ENCODE measurements at regions of chr16 and their contacts with region 1.

Region 1: DNA sequence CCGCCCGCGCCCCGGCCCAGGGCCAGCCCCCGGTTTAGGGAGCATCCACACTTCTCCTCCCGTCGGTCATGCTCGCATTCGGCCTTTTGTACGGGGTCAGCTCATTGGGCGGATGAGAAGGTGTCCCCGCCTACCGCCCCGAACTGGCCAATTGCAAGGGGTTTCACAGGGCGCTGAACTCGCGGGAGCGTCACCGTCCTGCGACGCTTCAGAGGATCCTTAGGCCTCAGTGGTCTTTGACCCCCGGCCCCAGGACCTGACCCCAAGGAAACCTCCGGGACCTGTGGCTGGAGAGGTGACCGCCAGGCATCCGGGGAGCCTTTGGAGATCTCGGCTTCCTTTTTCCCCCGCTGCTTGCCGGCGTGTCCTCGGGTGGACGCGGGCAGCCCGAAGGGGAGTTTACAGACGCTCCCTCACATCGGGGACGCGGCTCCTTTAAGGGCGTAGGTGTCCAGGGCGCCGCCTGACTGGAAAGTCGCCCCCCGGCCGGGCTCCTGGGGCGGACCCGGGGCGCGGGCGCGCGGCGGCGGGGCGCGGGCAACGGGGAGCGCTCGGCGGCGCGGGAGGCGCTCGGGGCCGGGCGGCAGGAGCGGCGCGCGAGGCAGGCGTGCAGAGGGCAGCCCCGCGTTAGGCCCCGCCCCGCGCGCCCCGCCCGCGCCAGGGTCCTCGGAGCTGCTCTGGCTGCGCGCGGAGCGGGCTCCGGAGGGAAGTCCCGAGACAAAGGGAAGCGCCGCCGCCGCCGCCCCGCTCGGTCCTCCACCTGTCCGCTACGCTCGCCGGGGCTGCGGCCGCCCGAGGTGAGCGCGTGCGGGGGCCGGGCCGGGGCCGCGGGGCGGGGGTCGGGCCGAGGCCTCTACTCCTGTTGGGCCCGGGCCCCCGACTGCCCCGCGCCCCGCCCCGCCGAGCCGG is at the start of gene UBE2I:
- DNase-seq: peak; percentile 97 to 99 (median 97)
- ATAC-seq: peak; percentile 87 to 91 (median 90)
- H3K4me3 ChIP-seq: peak within 1 kb of the TSS; percentile 79 to 98 (median 84)
- H3K27ac ChIP-seq: peak within 1 kb of the TSS; percentile 95 to 100 (median 99)
- H3K4me1 ChIP-seq: peaks cover 8 to 43% (median 36%) of the 10 kb centered on the region in 12 donors
- H3K27me3 ChIP-seq: no peaks in the 10 kb centered on the region
- CTCF ChIP-seq: no peak
- POLR2A ChIP-seq: peak in 1 of 2 donors; percentile 23
- total RNA-seq, gene UBE2I: 59.3 to 105 (median 85.9) TPM

Region 2: DNA sequence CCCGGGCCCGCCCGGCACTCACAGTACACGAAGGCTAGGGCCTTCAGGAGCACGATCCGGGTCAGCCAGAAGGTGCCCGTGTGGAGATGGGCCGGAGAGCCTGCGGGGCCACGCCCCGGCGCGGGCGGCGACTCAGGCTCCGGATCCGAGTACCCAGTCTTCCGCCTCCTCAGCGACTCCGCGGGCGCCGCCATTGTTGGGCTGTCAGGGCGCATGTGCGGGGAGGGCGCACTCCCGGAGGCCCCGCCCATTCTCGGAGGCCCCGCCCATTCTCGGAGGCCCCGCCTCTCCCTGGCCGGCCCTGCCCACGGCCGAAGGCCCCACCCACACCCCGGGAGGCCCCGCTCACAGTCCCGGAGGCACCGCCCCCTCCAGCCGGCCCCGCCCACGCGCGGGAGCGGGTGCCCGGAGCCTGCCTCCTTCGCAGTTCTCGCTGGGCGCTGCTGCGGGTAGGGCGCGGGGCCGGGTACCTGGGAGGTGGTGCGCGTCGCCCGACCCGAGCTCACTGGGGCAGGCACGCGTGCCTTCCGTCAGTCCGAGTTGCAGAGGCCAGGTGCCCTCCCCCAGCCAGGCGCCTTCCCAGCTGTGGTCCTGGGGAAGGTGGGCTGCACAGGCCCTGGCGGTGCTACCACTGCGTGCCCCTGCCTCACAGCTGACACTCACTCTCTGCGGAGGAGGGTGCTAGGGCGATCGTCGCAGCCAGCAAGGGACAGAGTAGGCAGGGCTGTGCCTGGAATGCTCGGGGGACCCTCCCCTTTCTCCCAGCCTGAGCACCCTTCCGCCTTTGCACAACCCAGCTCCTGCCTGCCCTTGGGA is 338.3 kb before region 1 on chr16 and contains the start of gene LMF1:
- intact Hi-C with region 1: no loop called
- DNase-seq: peak; percentile 93 to 98 (median 94)
- ATAC-seq: peak; percentile 97 to 99 (median 98)
- H3K4me3 ChIP-seq: peak within 1 kb of the TSS; percentile 49 to 99 (median 90)
- H3K27ac ChIP-seq: peak within 1 kb of the TSS; percentile 55 to 92 (median 84)
- H3K4me1 ChIP-seq: peaks cover 2 to 29% (median 18%) of the 10 kb centered on the region in 12 donors
- H3K27me3 ChIP-seq: no peaks in the 10 kb centered on the region
- CTCF ChIP-seq: no peak
- POLR2A ChIP-seq: peak in 1 of 2 donors; percentile 72
- total RNA-seq, gene LMF1: 4.3 to 19.2 (median 7.4) TPM

Region 3: DNA sequence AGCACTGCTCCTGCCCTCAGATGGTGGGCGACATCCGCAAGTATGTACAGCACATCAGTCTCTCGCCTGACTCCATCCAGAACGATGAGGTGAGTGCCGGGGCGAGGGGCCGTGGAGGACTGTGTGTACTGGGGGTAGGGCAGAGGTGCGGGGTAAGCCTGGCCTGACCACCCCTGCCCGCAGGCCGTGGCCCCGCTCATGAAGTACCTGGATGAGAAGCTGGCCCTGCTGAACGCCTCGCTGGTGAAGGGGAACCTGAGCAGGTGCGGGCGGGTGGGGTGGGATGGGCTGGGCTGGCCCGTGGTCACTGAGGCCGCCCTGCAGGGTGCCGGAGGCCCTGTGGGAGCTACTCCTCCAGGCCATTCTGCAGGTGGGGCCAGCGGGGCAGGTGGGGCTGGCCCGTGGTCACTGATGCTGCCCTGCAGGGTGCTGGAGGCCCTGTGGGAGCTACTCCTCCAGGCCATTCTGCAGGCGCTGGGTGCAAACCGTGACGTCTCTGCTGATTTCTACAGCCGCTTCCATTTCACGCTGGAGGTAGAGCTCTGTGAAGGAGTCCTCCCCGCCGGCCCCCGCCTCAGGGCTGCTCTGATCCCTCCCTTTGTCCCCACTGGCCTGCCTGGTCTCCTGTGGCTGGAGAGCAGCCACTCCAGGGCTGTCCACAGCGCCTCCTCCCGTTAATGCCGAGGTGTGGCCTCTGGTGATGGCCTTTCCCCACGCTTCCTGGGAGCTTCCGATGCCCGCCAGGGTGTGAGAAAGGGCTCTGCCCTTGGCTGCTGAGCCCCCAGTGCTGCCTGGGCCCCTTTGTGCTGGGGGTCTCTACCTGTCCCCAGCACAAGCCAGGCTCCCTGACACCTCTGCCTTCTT is 37.4 kb after region 1 on chr16:
- intact Hi-C with region 1: loop called in 4 of 10 experiments (anchors 2 to 5 kb)
- DNase-seq: no peak
- ATAC-seq: no peak
- H3K4me3 ChIP-seq: no peak overlapping the region
- H3K27ac ChIP-seq: no peak overlapping the region
- H3K4me1 ChIP-seq: peaks cover 0 to 29% (median 14%) of the 10 kb centered on the region in 12 donors
- H3K27me3 ChIP-seq: no peaks in the 10 kb centered on the region
- CTCF ChIP-seq: no peak
- POLR2A ChIP-seq: no peak

Region 4: GRCh38 chr16:1351582-1352362 is 42.5 kb after region 1 on chr16 and contains the starts of genes GNPTG and TSR3:
- intact Hi-C with region 1: loop called in 4 of 10 experiments (anchors 2 to 5 kb)
- DNase-seq: peak; percentile 88 to 95 (median 90)
- ATAC-seq: peak in 3 of 4 donors; percentile 81 to 86 (median 82)
- H3K4me3 ChIP-seq: peak within 1 kb of the TSS; percentile 64 to 100 (median 94)
- H3K27ac ChIP-seq: peak within 1 kb of the TSS; percentile 22 to 87 (median 74)
- H3K4me1 ChIP-seq: peaks cover 0 to 45% (median 20%) of the 10 kb centered on the region in 12 donors
- H3K27me3 ChIP-seq: no peaks in the 10 kb centered on the region
- CTCF ChIP-seq: no peak
- POLR2A ChIP-seq: peak in 1 of 2 donors; percentile 84
- total RNA-seq, gene GNPTG: 25.4 to 54.2 (median 31.0) TPM
- total RNA-seq, gene TSR3: 46.3 to 108 (median 58.9) TPM

Region 5: GRCh38 chr16:1363501-1364041 is 54.3 kb after region 1 on chr16:
- intact Hi-C with region 1: no loop called
- DNase-seq: peak in 2 of 5 donors; percentile 63 to 80
- ATAC-seq: peak; percentile 70 to 80 (median 71)
- H3K4me3 ChIP-seq: no peak overlapping the region
- H3K27ac ChIP-seq: no peak overlapping the region
- H3K4me1 ChIP-seq: no peaks in the 10 kb centered on the region
- H3K27me3 ChIP-seq: no peaks in the 10 kb centered on the region
- CTCF ChIP-seq: peak; percentile 52 to 87 (median 68)
- POLR2A ChIP-seq: no peak

Region 6: GRCh38 chr16:1408171-1408837 is 99.1 kb after region 1 on chr16:
- intact Hi-C with region 1: loop called in 4 of 10 experiments (anchors 5 to 10 kb)
- DNase-seq: peak; percentile 95 to 98 (median 96)
- ATAC-seq: peak; percentile 93 to 98 (median 97)
- H3K4me3 ChIP-seq: peak overlapping the region in 11 of 12 donors; percentile 34 to 69 (median 60)
- H3K27ac ChIP-seq: peak overlapping the region in 11 of 12 donors; percentile 13 to 65 (median 56)
- H3K4me1 ChIP-seq: peaks cover 0 to 28% (median 14%) of the 10 kb centered on the region in 12 donors
- H3K27me3 ChIP-seq: no peaks in the 10 kb centered on the region
- CTCF ChIP-seq: no peak
- POLR2A ChIP-seq: no peak

Region 7: GRCh38 chr16:1413684-1414531 is 104.7 kb after region 1 on chr16:
- intact Hi-C with region 1: loop called in 4 of 10 experiments (anchors 5 to 10 kb)
- DNase-seq: peak in 3 of 5 donors; percentile 43 to 82 (median 65)
- ATAC-seq: peak in 3 of 4 donors; percentile 36 to 43 (median 39)
- H3K4me3 ChIP-seq: peak overlapping the region; percentile 74 to 98 (median 96)
- H3K27ac ChIP-seq: peak overlapping the region; percentile 47 to 90 (median 84)
- H3K4me1 ChIP-seq: peaks cover 0 to 24% (median 11%) of the 10 kb centered on the region in 12 donors
- H3K27me3 ChIP-seq: no peaks in the 10 kb centered on the region
- CTCF ChIP-seq: peak; percentile 39 to 73 (median 60)
- POLR2A ChIP-seq: no peak

Region 8: DNA sequence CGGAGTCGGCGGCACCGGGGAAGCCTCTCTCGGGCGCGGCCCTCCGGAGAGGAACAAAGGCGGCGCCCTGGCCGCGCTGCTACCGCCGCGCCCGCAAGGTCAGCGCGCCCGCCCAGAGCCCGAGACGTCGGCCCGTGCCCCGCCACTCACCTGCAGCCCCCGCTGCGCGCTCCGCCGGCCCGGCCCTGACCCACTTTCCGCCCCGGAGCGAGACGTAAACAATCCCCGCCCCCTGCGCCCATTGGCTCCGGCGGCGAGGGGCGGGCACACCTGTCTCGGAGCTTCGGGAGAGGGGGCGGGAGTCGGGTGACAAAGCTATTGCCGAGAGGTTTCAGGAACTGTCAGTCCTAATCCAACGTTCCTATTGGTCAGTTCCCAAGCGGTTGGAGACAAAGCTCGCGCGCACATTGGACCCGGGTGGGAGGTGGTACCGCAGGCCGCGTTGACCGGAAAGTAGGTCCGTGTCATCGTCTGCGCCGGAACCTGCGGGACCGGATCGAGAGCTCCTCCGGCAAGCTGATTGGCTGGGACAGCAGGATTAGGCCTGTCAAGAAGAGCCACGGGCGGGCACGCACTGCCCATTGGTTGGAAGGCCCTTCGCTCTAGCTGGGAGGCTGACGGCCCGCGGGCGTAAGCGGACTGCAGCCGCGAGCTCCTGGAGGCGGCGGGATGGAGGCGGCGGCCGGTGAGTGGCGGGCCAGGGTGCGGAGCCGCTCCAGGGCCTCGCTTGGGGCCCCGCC is 473.3 kb after region 1 on chr16 and contains the starts of genes NUBP2 and SPSB3:
- intact Hi-C with region 1: loop called in 1 of 10 experiments (anchors 5 kb)
- DNase-seq: peak; percentile 100
- ATAC-seq: peak; percentile 93 to 98 (median 96)
- H3K4me3 ChIP-seq: peak within 1 kb of the TSS; percentile 75 to 100 (median 95)
- H3K27ac ChIP-seq: peak within 1 kb of the TSS; percentile 58 to 94 (median 88)
- H3K4me1 ChIP-seq: peaks cover 2 to 56% (median 28%) of the 10 kb centered on the region in 12 donors
- H3K27me3 ChIP-seq: no peaks in the 10 kb centered on the region
- CTCF ChIP-seq: peak in 1 of 12 donors; percentile 10
- POLR2A ChIP-seq: peak; percentile 80 to 93
- total RNA-seq, gene NUBP2: 26.7 to 81.9 (median 30.1) TPM
- total RNA-seq, gene SPSB3: 25.8 to 100 (median 31.8) TPM

Measured in heart left ventricle (tissue), 16 donors.